ENCODE measurements at regions of chr2 and their contacts with region 1.

Region 1: DNA sequence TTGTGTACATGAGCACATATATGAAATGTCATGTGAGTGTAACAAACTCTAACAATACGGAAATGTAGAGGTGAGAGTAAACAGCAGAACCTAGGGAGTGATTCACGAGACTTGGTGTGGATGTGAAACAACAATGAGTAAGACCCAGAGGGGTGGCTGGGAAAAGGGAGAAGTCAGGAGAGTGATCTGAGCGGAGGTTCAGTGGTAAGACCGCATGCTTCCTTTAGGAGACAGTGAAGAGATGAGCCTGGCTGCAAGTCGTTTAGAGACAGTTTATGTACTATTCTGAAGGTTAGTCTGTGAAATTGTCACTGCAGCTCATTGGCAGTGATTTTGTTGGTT is 150.6 kb downstream of the PRPF40A start:
- DNase-seq: no peak
- H3K4me3 ChIP-seq: no peak overlapping the region
- H3K27ac ChIP-seq: no peak overlapping the region
- H3K4me1 ChIP-seq: peaks cover 3 to 11% of the 10 kb centered on the region in 2 experiments; a peak in 3 of 4 replicates
- H3K27me3 ChIP-seq: no peaks in the 10 kb centered on the region
- CTCF ChIP-seq: no peak
- EP300 ChIP-seq: no peak
- RAD21 ChIP-seq: no peak

Region 2: GRCh38 chr2:152335010-152335725 is 231.5 kb before region 1 on chr2 and contains the start of gene FMNL2:
- CTCF ChIA-PET with region 1: no interaction called
- POLR2A ChIA-PET with region 1: no interaction called
- DNase-seq: peak; percentile 95
- H3K4me3 ChIP-seq: peak within 1 kb of the TSS; percentile 81 to 90
- H3K27ac ChIP-seq: peak within 1 kb of the TSS; percentile 52 to 83; a peak in 3 of 4 replicates
- H3K4me1 ChIP-seq: peaks cover 4 to 7% of the 10 kb centered on the region in 2 experiments; a peak in 3 of 4 replicates
- H3K27me3 ChIP-seq: no peaks in the 10 kb centered on the region
- CTCF ChIP-seq: peak; percentile 30; the same call in 1 of the 2 replicates
- EP300 ChIP-seq: no peak
- RAD21 ChIP-seq: no peak; the same call in none of the 2 replicates
- polyA plus RNA-seq, gene FMNL2: 14.5 and 16.1 TPM in 2 replicates

Region 3: DNA sequence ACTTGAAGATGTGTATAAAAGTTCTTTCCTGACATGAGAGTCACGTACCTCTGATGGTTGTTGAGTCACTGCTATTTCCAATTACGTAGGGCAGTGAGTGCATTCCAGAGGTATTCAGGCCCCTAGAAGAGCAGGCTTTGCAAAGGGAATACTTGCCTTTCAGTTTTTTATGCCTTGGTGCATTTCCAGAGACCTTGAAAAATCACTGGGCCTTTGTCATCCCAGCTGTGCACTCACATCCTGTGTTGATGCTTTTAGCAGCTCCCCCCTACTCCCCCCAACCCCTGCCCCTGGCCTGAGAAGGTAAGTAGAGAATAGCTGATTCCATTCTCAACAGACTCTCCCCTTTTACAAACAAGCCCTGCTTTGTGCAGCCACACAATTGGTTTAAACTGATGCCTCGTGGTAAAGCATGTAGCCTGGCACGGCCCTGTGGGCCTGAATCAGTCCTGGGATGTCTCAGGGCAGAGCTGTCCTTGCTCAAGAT is 23.7 kb before region 1 on chr2:
- CTCF ChIA-PET with region 1: no interaction called
- POLR2A ChIA-PET with region 1: no interaction called
- DNase-seq: peak; percentile 14
- H3K4me3 ChIP-seq: no peak overlapping the region
- H3K27ac ChIP-seq: peak overlapping the region; percentile 83 to 87
- H3K4me1 ChIP-seq: peaks cover 13 to 27% of the 10 kb centered on the region in 2 experiments
- H3K27me3 ChIP-seq: no peaks in the 10 kb centered on the region
- CTCF ChIP-seq: no peak
- EP300 ChIP-seq: peak in 1 of 2 experiments; percentile 79; a peak in 2 of 4 replicates
- RAD21 ChIP-seq: no peak

Region 4: DNA sequence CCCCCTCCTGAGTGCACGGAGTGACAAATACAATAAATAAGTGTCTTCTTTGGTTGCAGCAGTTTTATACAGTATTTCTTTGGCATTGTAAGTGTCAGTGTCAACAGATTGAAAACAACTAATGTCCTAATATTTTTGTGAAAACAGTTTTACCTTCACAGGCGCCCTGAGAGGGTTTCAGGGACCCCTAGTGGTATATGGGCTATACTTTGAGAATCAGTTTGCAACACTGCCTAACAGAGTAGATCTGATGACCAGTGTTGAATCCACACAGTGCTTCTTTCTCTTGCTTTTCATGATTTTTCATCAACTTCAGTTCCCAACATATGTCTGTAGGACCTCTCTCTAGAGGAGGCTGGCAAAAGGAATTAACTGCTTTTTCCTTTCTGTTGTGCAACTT is 11.7 kb before region 1 on chr2:
- CTCF ChIA-PET with region 1: interaction called, 10 read pairs
- POLR2A ChIA-PET with region 1: no interaction called
- DNase-seq: no peak
- H3K4me3 ChIP-seq: no peak overlapping the region
- H3K27ac ChIP-seq: no peak overlapping the region
- H3K4me1 ChIP-seq: peaks cover 2 to 16% of the 10 kb centered on the region in 2 experiments
- H3K27me3 ChIP-seq: no peaks in the 10 kb centered on the region
- CTCF ChIP-seq: peak; percentile 43
- EP300 ChIP-seq: no peak
- RAD21 ChIP-seq: peak; percentile 66